ENCODE measurements at regions of chr10 and their contacts with region 1.

Region 1: GRCh38 chr10:132836832-132837540 is 51.0 kb upstream of the NKX6-2 start:
- DNase-seq: peak in 1 of 2 donors; percentile 40
- ATAC-seq: peak; percentile 58 to 64
- H3K4me3 ChIP-seq: peak overlapping the region; percentile 45 to 62 (median 54)
- H3K27ac ChIP-seq: peak overlapping the region; percentile 86 to 94 (median 92)
- H3K4me1 ChIP-seq: no peaks in the 10 kb centered on the region
- H3K27me3 ChIP-seq: peaks cover 0 to 11% (median 0%) of the 10 kb centered on the region in 3 donors
- CTCF ChIP-seq: peak; percentile 91 to 98 (median 96)
- POLR2A ChIP-seq: no peak

Region 2: GRCh38 chr10:132939957-132940790 is 103.2 kb after region 1 on chr10:
- in situ Hi-C with region 1: no loop called
- intact Hi-C with region 1: loop called (anchors 5 kb)
- DNase-seq: no peak
- ATAC-seq: peak in 1 of 2 donors; percentile 51
- H3K4me3 ChIP-seq: no peak overlapping the region
- H3K27ac ChIP-seq: no peak overlapping the region
- H3K4me1 ChIP-seq: no peaks in the 10 kb centered on the region
- H3K27me3 ChIP-seq: peaks cover 21 to 26% (median 24%) of the 10 kb centered on the region in 3 donors
- CTCF ChIP-seq: peak; percentile 44 to 75 (median 66)
- POLR2A ChIP-seq: no peak

Region 3: GRCh38 chr10:133117688-133118071 is 280.7 kb after region 1 on chr10:
- in situ Hi-C with region 1: no loop called
- intact Hi-C with region 1: loop called (anchors 2 kb)
- DNase-seq: peak; percentile 89 to 97
- ATAC-seq: peak; percentile 95 to 96
- H3K4me3 ChIP-seq: no peak overlapping the region
- H3K27ac ChIP-seq: peak overlapping the region; percentile 85 to 93 (median 88)
- H3K4me1 ChIP-seq: peaks cover 6 to 10% of the 10 kb centered on the region in 2 donors
- H3K27me3 ChIP-seq: no peaks in the 10 kb centered on the region
- CTCF ChIP-seq: peak in 1 of 5 experiments; percentile 33
- POLR2A ChIP-seq: no peak

Region 4: DNA sequence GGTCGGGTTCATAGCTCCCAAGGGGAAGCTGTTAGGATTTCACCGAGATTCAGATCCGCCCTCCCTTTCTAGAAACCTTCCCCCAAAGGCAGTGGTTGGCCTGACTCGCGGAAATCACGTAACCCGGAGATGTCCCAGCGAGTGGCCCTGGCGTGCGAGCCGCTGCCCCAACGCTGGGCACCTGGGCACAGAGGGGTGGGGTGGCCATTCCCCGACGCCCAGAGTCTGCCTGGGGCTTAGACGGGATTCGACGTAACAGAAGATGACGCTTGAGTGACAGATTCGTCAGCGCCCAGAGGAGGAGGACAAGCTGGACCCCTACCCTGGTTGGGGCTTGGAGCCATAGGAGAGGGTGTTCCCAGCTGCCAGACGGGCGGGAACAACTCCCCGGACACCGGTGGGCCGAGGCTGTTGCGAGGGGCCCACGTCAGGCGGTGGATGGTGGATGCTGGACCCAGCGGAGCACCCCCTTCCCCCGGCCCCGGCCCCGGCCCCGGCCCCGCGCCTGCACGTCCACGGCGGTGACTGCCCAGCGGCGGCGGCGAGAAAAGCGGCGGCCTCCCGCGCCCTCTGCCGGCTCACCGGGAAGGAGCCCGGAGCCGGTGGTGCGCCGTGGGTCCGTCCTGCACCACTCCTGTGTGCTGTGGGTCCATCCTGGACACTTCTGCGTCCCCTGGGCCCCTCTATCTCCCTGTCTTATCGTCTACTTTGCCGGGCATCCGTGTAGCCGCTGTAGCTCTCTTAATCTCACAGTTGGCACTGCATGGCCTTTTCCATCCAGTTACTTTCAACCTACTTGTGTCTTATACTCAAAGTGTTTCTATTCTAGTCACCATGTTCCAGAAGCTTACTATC is 287.6 kb after region 1 on chr10:
- in situ Hi-C with region 1: no loop called
- intact Hi-C with region 1: loop called (anchors 1 kb)
- DNase-seq: peak in 1 of 2 donors; percentile 18
- ATAC-seq: peak; percentile 73 to 89
- H3K4me3 ChIP-seq: no peak overlapping the region
- H3K27ac ChIP-seq: no peak overlapping the region
- H3K4me1 ChIP-seq: no peaks in the 10 kb centered on the region
- H3K27me3 ChIP-seq: peaks cover 0 to 8% (median 0%) of the 10 kb centered on the region in 3 donors
- CTCF ChIP-seq: peak; percentile 36 to 84 (median 55)
- POLR2A ChIP-seq: no peak

Measured in gastrocnemius medialis (tissue), 4 donors.